Left cardiac atrium (tissue), 4 donors: ENCODE measurements at regions of chr10 and their contacts with region 1.

Region 1: DNA sequence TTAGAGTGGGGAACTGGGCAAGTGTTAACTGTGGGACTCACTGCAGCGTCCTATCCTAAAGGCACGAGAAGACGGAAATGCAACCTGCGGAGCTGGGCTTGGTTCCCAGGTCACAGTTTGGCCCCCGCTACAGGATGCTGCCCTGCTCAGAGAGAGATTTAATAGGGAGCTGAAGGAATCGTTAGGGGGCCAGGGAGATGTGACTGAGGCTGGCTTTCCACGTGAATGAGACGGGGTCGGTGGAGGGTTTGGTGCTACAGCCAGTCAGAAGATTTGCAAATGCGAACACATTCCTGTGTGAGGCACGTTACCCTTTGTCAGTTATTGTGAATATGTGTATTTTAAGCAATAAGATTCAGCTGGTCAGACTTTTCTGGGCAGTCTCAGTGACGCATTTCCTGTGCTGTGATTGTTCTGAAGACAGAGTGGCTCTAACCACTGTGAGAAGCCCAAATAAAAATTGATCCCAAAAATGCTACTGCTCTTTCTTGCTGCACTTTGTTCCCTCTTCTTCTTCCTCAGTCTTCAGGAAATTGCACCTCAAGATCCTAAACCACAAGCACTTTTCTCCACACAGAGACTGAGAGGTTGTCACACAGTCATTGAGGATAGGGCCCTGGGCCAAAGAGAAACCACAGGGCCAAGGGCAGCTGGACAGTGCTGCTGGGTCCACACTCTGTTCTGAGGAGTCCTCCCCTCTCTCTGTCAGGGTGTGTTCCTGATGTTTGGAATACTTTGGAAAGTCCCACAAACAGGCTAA is 21.2 kb downstream of the CYP17A1 start:
- DNase-seq: peak; percentile 57
- ATAC-seq: peak; percentile 70 to 77

Region 2: GRCh38 chr10:102752934-102753664 is 62.9 kb before region 1 on chr10:
- intact Hi-C with region 1: loop called in 1 of 2 experiments (anchors 5 kb)
- DNase-seq: no peak
- ATAC-seq: peak; percentile 79